GM13976 (cell line): ENCODE measurements at regions of chr10 and their contacts with region 1.

Region 1: GRCh38 chr10:49592726-49593563 is 17.2 kb upstream of the SLC18A3 start:
- DNase-seq: peak; percentile 82
- CTCF ChIP-seq: peak; percentile 87

Region 2: GRCh38 chr10:49761789-49762565 is 169.0 kb after region 1 on chr10 and contains the start of gene OGDHL:
- in situ Hi-C with region 1: no loop called
- DNase-seq: peak; percentile 92
- CTCF ChIP-seq: no peak

Region 3: DNA sequence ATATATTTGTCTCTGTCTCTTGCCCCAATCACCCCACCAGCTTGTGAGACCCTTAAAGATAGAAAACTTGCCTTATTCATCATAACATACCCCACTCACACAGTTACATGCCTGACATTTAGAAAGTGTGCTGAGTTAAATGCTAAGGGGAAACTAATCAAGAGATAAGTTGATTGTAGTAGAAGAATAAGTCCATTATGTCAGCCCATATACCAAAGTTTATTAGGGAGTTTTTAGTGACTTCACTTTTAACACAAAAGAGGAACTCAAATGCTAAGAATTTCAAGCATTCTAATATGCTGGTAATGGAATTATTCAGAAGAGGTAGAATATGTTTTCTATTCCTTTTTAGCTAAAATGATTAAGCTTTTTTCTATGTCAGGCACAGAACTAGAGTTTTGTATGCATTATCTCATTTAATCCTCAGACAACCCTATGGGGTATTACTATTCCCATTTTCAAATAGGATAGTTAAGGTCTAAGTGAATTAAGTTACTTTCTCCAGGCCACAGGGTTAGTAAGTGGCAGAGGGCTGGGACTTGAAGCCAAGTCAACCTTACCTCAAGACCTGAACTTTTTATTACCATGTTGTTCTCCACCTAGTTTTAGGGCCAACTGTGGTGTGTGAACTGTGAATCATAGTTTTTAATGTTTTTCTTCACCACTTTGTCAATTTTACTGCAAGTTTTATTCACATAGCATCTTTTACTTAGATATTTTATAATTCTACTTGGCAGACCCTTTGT is 638.7 kb after region 1 on chr10:
- in situ Hi-C with region 1: loop called (anchors 25 kb)
- DNase-seq: no peak
- CTCF ChIP-seq: no peak